Endothelial cell of umbilical vein (primary cell): ENCODE measurements at regions of chr3 and their contacts with region 1.

Region 1: DNA sequence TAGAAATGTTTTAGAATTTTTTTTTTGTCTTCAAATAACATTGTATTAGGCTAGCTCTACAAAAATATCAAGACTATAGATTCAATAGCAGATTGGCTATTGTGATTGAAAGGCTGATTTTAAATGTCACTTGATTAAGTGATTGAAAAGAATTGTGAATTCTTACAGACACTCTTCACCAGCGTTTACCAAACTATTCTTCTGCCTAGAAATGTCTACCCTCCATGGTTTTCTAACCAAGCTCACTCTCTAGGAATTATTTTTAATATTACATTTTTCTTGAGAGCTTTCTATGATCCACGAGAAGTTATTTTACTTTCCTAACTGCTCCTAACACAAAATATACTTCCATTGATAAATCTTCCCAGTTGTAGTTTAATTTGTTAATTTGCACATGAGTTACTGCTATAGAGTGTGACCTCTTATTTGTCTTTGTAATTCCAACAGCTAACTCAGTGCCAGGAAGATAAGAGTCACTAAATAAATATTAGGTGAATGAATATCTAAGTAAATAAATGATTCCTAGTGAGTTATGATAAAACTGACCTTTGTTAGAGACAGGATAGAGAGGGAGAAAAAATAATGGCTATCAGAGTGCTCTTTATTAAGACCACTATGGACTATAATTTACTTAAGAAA is 319.8 kb downstream of the NAALADL2 start:
- DNase-seq: peak; percentile 79
- H3K4me3 ChIP-seq: no peak overlapping the region
- H3K27ac ChIP-seq: no peak overlapping the region
- H3K4me1 ChIP-seq: peaks cover 28% of the 10 kb centered on the region
- H3K27me3 ChIP-seq: no peaks in the 10 kb centered on the region
- CTCF ChIP-seq: no peak
- POLR2A ChIP-seq: no peak

Region 2: GRCh38 chr3:175192536-175192935 is 13.6 kb after region 1 on chr3:
- CTCF ChIA-PET with region 1: interaction called, 5 read pairs
- POLR2A ChIA-PET with region 1: no interaction called
- dilution Hi-C with region 1: no loop called
- intact Hi-C with region 1: loop called (anchors 1 kb)
- DNase-seq: peak; percentile 60
- H3K4me3 ChIP-seq: no peak overlapping the region
- H3K27ac ChIP-seq: no peak overlapping the region
- H3K4me1 ChIP-seq: peaks cover 19% of the 10 kb centered on the region
- H3K27me3 ChIP-seq: no peaks in the 10 kb centered on the region
- CTCF ChIP-seq: no peak
- POLR2A ChIP-seq: no peak